Activated naive CD4-positive, alpha-beta T cell treated with anti-CD3 and anti-CD28 coated beads for 36 hours (primary cell): ENCODE measurements at regions of chr6 and their contacts with region 1.

Region 1: DNA sequence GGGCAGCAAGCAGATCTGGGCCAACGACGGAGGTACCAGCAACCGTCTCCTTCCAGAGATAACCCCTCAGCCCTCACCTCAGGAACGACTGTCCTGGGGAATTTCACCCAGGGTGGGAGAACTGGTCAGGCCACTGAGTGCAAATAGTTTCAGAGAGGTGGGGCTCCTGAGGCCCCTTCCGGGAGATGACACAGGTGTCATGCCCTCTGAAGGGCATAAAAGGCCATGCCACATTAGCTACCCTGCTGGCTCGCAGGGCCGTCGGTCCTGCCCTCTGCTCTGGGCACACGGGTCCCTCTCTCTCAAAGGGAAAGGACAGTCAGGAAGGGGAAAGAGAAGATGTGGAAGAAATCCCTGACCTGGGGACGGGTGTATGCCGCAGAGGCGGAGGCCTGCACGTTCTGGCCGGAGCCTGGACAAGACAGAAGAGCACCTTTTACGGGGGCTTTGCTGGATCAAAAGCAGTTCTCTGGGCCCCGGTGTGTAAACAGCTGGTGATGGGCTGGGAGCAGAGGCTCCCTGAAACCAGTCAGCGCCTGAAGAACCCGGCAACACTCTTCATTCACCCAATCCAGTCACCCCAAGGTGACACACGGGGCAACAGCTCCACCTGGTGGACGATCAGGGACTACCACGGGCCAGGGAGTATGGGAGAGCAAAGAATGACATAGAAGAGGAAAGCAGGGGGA is 6.4 kb upstream of the TAF8 start:
- DNase-seq: peak; percentile 98
- H3K4me3 Mint-ChIP-seq: peak overlapping the region; percentile 75
- H3K27ac Mint-ChIP-seq: peak overlapping the region; percentile 97
- H3K4me1 Mint-ChIP-seq: peaks cover 81% of the 10 kb centered on the region
- H3K27me3 Mint-ChIP-seq: no peaks in the 10 kb centered on the region

Region 2: DNA sequence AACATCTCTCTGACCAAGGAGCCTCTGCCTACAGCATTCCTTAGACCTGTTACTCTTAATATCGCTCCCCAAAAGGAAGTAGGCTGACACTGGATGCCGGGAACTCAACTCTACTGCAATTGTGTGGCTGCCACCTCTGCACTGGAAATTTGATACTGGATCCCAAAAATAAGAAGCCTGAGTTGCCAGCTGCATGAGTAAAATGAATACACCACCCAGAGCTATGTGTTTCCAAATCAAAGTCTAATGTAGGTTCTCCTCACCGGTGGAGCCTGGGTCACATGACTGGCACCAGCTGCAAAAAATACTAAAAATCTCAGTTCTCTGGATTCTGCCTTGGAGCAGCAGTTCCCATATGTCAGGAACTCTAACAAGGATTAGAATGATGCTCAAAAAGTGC is 1041.7 kb before region 1 on chr6:
- CTCF ChIA-PET with region 1: no interaction called
- intact Hi-C with region 1: no loop called
- DNase-seq: no peak
- H3K4me3 Mint-ChIP-seq: no peak overlapping the region
- H3K27ac Mint-ChIP-seq: no peak overlapping the region
- H3K4me1 Mint-ChIP-seq: no peaks in the 10 kb centered on the region
- H3K27me3 Mint-ChIP-seq: peaks cover 14% of the 10 kb centered on the region

Region 3: GRCh38 chr6:41634657-41635056 is 409.3 kb before region 1 on chr6:
- CTCF ChIA-PET with region 1: no interaction called
- intact Hi-C with region 1: no loop called
- DNase-seq: no peak
- H3K4me3 Mint-ChIP-seq: no peak overlapping the region
- H3K27ac Mint-ChIP-seq: no peak overlapping the region
- H3K4me1 Mint-ChIP-seq: peaks cover 11% of the 10 kb centered on the region
- H3K27me3 Mint-ChIP-seq: peaks cover 24% of the 10 kb centered on the region

Region 4: DNA sequence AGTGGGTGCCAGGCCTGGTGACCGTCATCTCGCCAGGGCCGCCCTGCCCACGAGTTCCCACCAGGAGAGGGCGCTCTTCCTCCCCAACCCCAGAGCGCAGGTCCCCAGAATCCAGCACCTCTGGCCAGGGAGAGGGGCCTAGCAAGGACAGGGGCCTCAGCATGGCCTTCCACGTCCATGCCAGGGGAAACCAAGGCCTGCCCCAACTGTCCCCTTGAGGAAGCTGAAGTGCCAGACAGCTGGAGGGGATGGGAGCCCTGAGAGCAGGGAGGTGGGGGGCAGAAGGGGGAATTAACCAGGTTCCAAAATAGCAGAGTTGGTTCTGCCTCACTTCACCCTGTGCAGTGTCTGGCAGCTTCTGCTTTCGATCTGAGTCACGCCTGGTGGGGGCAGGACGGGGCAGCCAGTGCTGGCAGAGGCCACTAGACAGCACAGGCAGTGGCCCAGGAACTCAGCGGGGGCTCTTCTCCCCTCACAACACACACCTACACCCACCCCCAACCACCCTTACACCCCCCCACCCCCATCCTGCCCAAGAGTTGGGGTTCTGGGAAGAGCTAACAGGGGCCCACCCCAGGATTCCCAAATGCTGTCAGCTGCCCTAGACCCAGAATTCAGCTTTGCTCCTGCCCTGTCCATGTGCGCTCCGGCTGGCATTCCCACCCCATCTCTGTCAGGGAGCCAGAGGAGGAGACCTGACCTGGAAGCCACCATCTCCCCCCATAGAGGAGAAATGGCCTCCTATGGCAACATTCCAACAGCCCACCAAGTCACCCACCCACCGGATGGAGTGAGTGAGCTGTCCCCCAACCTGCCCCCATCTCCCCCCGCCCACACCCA is 337.7 kb before region 1 on chr6:
- CTCF ChIA-PET with region 1: no interaction called
- intact Hi-C with region 1: loop called (anchors 10 kb)
- DNase-seq: peak; percentile 88
- H3K4me3 Mint-ChIP-seq: peak overlapping the region; percentile 26
- H3K27ac Mint-ChIP-seq: peak overlapping the region; percentile 87
- H3K4me1 Mint-ChIP-seq: peaks cover 29% of the 10 kb centered on the region
- H3K27me3 Mint-ChIP-seq: no peaks in the 10 kb centered on the region

Region 5: DNA sequence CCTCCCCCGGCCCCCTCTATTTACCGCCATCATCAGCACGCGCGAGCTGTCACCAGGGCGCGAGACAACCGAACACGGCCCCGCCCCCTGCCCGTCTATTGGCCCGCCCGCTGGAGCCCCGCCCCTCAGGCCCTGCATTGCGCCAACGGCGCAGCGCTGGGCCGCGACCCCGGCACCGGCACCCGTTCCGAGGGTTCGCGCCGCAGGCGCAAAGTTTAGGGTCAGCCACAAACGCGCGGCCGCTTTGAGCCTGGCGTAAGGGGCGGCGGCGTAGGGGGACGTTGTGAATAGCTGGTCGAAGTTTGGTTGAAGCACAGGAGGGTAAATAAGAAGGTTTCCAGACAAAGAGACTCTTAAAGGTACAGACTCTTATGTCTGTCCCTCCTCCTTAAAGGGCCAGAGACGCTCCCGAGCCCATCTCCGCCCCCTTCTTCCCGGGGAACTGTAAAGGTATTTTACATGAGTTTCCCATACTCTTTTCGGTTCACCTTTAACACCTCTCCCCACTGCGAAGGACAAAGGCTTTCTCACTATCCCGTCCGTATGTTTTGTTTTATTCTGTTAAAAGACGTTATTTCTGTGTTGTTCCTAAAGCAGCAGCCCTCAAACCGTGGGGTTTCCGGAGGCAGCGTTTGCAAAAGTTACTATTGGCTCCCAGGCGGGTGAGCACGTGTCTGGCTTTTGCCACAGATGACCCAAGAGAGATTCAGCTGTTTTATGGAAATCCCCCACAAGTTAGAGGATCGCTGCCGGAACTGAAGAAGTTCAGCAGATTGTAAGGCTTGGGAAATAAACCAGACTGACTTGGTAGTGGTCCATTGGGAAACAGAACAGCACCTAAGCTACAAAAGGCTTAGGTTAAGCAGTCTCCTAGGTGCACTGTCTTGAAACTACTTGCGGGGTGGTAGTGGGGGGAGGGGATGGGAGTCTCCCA is 148.4 kb before region 1 on chr6 and contains the start of gene USP49:
- CTCF ChIA-PET with region 1: interaction called, 32 read pairs
- intact Hi-C with region 1: loop called (anchors 2 kb)
- DNase-seq: peak; percentile 93
- H3K4me3 Mint-ChIP-seq: no peak within 1 kb of the TSS
- H3K27ac Mint-ChIP-seq: peak within 1 kb of the TSS; percentile 91
- H3K4me1 Mint-ChIP-seq: peaks cover 11% of the 10 kb centered on the region
- H3K27me3 Mint-ChIP-seq: no peaks in the 10 kb centered on the region
- total RNA-seq, gene USP49: 8.3 to 8.4 TPM

Region 6: GRCh38 chr6:41936073-41936837 is 107.7 kb before region 1 on chr6:
- CTCF ChIA-PET with region 1: interaction called, 296 read pairs
- intact Hi-C with region 1: loop called (anchors 1 kb)
- DNase-seq: peak; percentile 80
- H3K4me3 Mint-ChIP-seq: peak overlapping the region; percentile 100
- H3K27ac Mint-ChIP-seq: peak overlapping the region; percentile 99
- H3K4me1 Mint-ChIP-seq: peaks cover 38% of the 10 kb centered on the region
- H3K27me3 Mint-ChIP-seq: no peaks in the 10 kb centered on the region

Region 7: GRCh38 chr6:42009966-42010891 is 33.7 kb before region 1 on chr6:
- CTCF ChIA-PET with region 1: interaction called, 17 read pairs
- intact Hi-C with region 1: loop called (anchors 1 kb)
- DNase-seq: peak; percentile 86
- H3K4me3 Mint-ChIP-seq: peak overlapping the region; percentile 83
- H3K27ac Mint-ChIP-seq: peak overlapping the region; percentile 100
- H3K4me1 Mint-ChIP-seq: peaks cover 76% of the 10 kb centered on the region
- H3K27me3 Mint-ChIP-seq: no peaks in the 10 kb centered on the region

Region 8: DNA sequence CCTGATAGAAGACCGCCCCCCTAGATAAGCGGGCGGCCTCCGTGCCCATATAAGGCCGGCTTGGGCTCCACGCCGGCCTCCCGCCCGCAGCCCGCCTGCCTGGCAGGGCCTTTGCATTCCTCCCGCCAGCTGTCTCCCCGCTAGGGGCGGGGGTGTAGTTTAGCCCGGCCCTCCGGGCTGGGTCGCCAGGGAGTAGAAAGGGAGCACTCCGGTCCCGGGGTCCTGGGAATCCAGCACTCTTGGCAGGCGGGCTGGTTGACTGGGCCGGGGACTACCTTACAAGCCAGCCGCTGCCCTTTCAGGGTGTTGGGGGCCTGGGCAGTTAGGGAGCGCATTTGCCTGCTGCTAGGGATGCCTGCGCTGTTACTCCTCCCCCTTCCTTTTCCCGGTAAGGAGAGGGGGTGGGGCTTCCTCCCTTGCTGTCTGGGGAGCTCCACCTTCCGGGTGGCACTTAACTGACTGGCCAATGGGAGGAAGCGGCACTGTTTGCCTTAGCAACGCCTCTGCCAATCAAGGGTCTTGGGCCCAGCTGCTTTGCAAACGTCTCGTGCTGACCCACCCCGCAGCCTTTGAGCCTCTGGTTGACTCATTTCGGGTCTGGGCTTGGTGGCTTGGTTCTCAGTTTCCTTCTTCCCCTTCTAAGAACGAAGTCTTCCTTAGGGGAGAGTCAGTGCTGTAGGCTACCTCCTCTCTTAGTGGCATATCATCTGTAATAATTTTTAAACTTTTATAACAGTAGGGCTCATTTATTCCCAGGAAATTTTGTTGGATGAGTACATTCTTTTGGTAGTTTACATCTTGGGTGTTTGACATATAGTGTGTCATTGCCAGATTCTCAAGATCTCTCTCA is 1130.6 kb after region 1 on chr6:
- CTCF ChIA-PET with region 1: no interaction called
- intact Hi-C with region 1: loop called (anchors 5 kb)
- DNase-seq: peak; percentile 99
- H3K4me3 Mint-ChIP-seq: peak overlapping the region; percentile 90
- H3K27ac Mint-ChIP-seq: peak overlapping the region; percentile 80
- H3K4me1 Mint-ChIP-seq: peaks cover 36% of the 10 kb centered on the region
- H3K27me3 Mint-ChIP-seq: no peaks in the 10 kb centered on the region